ENCODE measurements at regions of chr17 and their contacts with region 1.

Region 1: GRCh38 chr17:50161023-50161910 is 4.5 kb upstream of the SGCA start:
- DNase-seq: peak; percentile 97
- H3K4me3 Mint-ChIP-seq: peak overlapping the region; percentile 64
- H3K27ac Mint-ChIP-seq: peak overlapping the region; percentile 96
- H3K4me1 Mint-ChIP-seq: peaks cover 35% of the 10 kb centered on the region
- H3K27me3 Mint-ChIP-seq: no peaks in the 10 kb centered on the region

Region 2: GRCh38 chr17:50047488-50048126 is 113.7 kb before region 1 on chr17:
- CTCF ChIA-PET with region 1: no interaction called
- intact Hi-C with region 1: no loop called
- DNase-seq: peak; percentile 64
- H3K4me3 Mint-ChIP-seq: no peak overlapping the region
- H3K27ac Mint-ChIP-seq: peak overlapping the region; percentile 62
- H3K4me1 Mint-ChIP-seq: peaks cover 46% of the 10 kb centered on the region
- H3K27me3 Mint-ChIP-seq: peaks cover 2% of the 10 kb centered on the region

Region 3: GRCh38 chr17:50177983-50178834 is 16.9 kb after region 1 on chr17:
- CTCF ChIA-PET with region 1: interaction called, 16 read pairs
- intact Hi-C with region 1: no loop called
- DNase-seq: peak; percentile 73
- H3K4me3 Mint-ChIP-seq: peak overlapping the region; percentile 22
- H3K27ac Mint-ChIP-seq: no peak overlapping the region
- H3K4me1 Mint-ChIP-seq: peaks cover 15% of the 10 kb centered on the region
- H3K27me3 Mint-ChIP-seq: no peaks in the 10 kb centered on the region

Measured in activated naive CD4-positive, alpha-beta T cell treated with anti-CD3 and anti-CD28 coated beads for 36 hours (primary cell).